Prostate gland (tissue), 2 donors: ENCODE measurements at regions of chr2 and their contacts with region 1.

Region 1: GRCh38 chr2:197310271-197310985 is at the start of gene ANKRD44:
- DNase-seq: peak; percentile 85
- H3K4me3 ChIP-seq: peak within 1 kb of the TSS; percentile 64 to 70
- H3K27ac ChIP-seq: peak within 1 kb of the TSS; percentile 68 to 82
- H3K4me1 ChIP-seq: no peaks in the 10 kb centered on the region
- H3K27me3 ChIP-seq: no peaks in the 10 kb centered on the region
- CTCF ChIP-seq: peak; percentile 32 to 79 (median 56)
- POLR2A ChIP-seq: peak; percentile 53
- total RNA-seq, gene ANKRD44: 6.0 to 11.2 TPM

Region 2: DNA sequence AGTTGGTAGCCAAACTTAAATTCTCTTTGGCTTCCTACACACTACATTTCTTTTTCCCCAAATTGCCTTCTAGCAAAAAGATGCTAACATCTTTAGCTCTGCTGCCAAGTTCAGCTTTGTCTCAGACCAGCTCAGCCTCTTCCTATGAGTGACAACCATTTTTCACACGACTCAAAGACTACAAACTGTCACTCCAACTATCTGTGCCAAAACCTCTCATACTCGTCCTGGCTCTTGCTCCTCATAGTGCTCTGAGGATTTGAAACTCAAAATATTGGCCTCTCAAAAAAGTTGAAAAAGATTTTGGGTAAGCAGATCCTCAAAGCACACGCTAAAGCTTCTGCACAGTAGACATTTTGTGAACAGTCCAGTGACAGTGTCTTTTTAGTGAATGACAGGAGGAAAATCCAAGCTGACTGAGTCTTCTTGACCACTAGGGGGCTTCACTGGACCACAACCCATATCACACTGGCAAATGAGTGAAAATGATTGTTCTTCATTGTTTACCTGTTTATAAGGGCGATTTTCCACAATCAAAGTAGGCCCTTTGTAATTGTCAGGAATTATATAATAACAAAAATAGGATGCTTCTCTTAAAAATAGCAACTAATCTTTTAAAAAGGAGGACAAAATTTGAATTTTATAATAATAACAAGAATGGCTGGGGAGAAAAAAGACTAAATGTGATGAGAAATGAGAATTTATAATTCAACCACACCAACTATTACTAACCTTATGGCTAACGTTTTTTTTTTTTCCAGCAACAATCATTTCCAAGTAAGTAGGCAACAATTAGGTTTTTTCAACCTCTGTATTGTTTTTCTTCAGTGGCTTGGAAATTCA is 298.4 kb before region 1 on chr2:
- intact Hi-C with region 1: loop called (anchors 5 kb)
- DNase-seq: no peak
- H3K4me3 ChIP-seq: no peak overlapping the region
- H3K27ac ChIP-seq: no peak overlapping the region
- H3K4me1 ChIP-seq: no peaks in the 10 kb centered on the region
- H3K27me3 ChIP-seq: no peaks in the 10 kb centered on the region
- CTCF ChIP-seq: peak; percentile 45 to 59 (median 56)
- POLR2A ChIP-seq: no peak

Region 3: DNA sequence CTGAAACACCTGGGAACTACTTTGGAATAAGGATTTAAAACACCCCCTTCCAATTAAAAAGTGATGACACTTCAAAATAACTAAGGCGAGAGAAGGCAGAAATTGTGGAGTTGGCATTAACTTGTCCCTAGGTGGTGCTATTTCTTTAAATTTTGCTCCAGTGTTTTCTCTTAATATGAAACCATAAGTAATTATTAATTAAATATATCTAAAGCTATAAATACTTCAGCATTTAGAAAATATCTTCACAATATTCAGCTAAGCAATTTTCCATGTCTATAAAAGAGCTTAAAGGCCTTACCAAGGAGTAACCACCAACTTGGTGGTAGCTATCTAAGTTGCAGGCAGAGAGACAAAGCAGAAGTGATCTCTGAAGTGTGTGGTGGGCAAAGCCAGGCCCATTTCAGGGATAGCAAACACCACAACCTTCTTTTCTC is 197.1 kb before region 1 on chr2:
- intact Hi-C with region 1: loop called (anchors 2 kb)
- DNase-seq: no peak
- H3K4me3 ChIP-seq: no peak overlapping the region
- H3K27ac ChIP-seq: no peak overlapping the region
- H3K4me1 ChIP-seq: no peaks in the 10 kb centered on the region
- H3K27me3 ChIP-seq: no peaks in the 10 kb centered on the region
- CTCF ChIP-seq: peak in 3 of 4 experiments; percentile 58 to 62 (median 62)
- POLR2A ChIP-seq: no peak

Region 4: GRCh38 chr2:197191177-197191939 is 119.1 kb before region 1 on chr2:
- intact Hi-C with region 1: loop called (anchors 1 kb)
- DNase-seq: no peak
- H3K4me3 ChIP-seq: no peak overlapping the region
- H3K27ac ChIP-seq: no peak overlapping the region
- H3K4me1 ChIP-seq: no peaks in the 10 kb centered on the region
- H3K27me3 ChIP-seq: no peaks in the 10 kb centered on the region
- CTCF ChIP-seq: peak; percentile 46 to 81 (median 73)
- POLR2A ChIP-seq: no peak

Region 5: DNA sequence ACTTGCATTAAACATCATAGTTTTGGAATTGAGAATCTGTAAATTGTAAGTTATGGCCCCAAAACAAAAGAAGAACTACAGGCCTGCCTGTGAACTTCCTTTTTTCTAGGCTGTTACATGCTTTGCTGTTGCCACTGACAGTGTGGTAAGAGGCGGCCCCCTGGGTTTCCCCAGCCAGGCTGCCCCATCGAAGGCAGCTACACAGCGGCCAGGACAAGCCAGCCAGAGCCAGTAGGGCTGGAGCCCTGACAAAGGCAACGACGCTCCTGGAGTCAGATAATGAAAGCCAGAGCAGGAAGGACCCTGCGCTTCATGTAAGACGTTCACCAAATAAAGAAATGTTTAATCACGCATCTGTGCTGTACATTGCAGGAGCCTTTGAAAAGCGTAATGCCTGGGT is 54.9 kb before region 1 on chr2:
- intact Hi-C with region 1: loop called (anchors 5 kb)
- DNase-seq: peak; percentile 14
- H3K4me3 ChIP-seq: no peak overlapping the region
- H3K27ac ChIP-seq: peak overlapping the region in 1 of 2 donors; percentile 0
- H3K4me1 ChIP-seq: no peaks in the 10 kb centered on the region
- H3K27me3 ChIP-seq: no peaks in the 10 kb centered on the region
- CTCF ChIP-seq: no peak
- POLR2A ChIP-seq: no peak